ENCODE measurements at regions of chr10 and their contacts with region 1.

Region 1: DNA sequence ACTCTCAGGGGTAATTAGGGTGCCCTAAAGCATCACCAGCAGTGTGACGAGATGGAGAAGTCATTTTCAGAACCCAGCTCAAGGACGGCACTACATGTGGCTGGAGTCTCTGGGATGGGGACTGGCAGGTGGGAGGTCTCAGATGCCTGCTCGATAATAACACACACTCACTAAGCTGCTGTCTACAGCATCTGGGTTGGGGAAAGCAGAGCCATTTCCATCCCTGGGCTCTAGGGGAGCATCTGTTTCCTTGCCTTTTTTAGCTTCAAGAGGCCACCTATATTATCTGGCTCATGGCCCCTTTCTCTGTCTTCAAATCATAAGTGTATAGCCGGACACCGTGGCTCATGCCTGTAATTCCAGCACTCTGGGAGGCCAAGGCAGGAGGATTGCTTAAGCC is 79.6 kb downstream of the SH3PXD2A start:
- DNase-seq: no peak
- ATAC-seq: no peak
- H3K4me3 ChIP-seq: no peak overlapping the region
- H3K27ac ChIP-seq: no peak overlapping the region
- H3K4me1 ChIP-seq: peaks cover 12% of the 10 kb centered on the region; the same call in 1 of the 2 replicates
- H3K27me3 ChIP-seq: no peaks in the 10 kb centered on the region
- CTCF ChIP-seq: no peak

Region 2: DNA sequence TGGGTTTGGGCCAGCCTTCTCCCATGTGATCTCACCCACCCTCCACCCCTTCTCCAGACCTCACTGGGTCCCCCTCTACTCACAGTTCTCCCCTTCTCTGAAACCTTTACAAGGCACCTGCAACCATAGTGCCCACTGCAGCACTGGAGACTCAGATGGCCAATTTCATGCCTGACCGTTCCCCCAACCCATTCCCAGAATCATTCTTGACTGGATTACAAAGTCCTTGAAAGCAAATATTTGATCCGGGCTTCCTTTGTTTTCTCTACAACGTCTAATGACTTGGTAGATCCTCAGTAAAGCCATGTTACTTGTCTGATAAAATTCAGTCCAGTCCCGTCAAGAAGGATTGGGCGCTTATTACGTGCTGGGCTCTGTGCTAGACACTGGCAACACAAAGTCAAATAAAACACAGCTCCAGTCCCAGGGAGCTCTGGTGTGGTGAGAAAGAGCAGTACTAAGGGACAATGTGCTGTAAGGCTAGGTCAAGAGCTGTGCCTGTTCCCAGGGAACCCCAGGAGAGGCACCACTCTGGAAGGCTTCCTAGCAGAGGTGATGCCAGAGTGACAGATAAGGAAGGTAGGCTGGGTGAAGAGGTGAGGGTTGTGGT is 43.1 kb after region 1 on chr10:
- CTCF ChIA-PET with region 1: no interaction called
- POLR2A ChIA-PET with region 1: interaction called, 16 read pairs
- in situ Hi-C with region 1: no loop called
- intact Hi-C with region 1: no loop called
- DNase-seq: no peak
- ATAC-seq: no peak; the same call in 1 of the 2 replicates
- H3K4me3 ChIP-seq: no peak overlapping the region
- H3K27ac ChIP-seq: no peak overlapping the region
- H3K4me1 ChIP-seq: no peaks in the 10 kb centered on the region
- H3K27me3 ChIP-seq: no peaks in the 10 kb centered on the region
- CTCF ChIP-seq: no peak